ENCODE measurements at regions of chr9 and their contacts with region 1.

Region 1: DNA sequence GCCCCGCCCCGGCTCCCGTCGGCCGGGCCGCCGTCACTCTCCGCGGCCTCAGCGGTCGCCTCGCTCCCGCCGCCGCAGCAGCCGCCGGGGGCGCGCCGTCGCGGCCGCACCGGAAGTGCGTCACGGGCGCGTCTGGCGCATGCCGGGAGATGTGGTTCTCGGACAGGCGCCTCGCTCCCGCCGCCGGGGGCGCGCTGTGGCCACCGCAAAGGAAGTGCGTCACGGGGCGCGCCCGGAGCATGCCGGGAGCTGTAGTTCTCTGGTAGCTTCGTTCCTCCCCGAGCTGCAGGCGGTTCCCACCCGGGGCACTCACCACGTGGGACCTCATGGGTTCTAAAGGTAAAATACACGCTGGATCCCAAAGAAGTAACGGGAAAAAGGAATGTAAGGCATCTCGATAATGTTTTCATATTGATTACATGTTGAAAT is at the start of gene UBAC1:
- DNase-seq: peak; percentile 93
- H3K4me3 Mint-ChIP-seq: peak within 1 kb of the TSS; percentile 82
- H3K27ac Mint-ChIP-seq: peak within 1 kb of the TSS; percentile 66
- H3K4me1 Mint-ChIP-seq: peaks cover 19% of the 10 kb centered on the region
- H3K27me3 Mint-ChIP-seq: peaks cover 21% of the 10 kb centered on the region
- CTCF ChIP-seq: no peak
- total RNA-seq, gene UBAC1: 19.5 and 19.7 TPM in 2 replicates

Region 2: GRCh38 chr9:136051517-136052432 is 90.5 kb after region 1 on chr9:
- CTCF ChIA-PET with region 1: no interaction called
- intact Hi-C with region 1: loop called (anchors 10 kb)
- DNase-seq: peak; percentile 85
- H3K4me3 Mint-ChIP-seq: peak overlapping the region; percentile 68
- H3K27ac Mint-ChIP-seq: no peak overlapping the region
- H3K4me1 Mint-ChIP-seq: peaks cover 17% of the 10 kb centered on the region
- H3K27me3 Mint-ChIP-seq: no peaks in the 10 kb centered on the region
- CTCF ChIP-seq: no peak

Region 3: GRCh38 chr9:136122425-136123383 is 161.4 kb after region 1 on chr9:
- CTCF ChIA-PET with region 1: interaction called, 3 read pairs
- intact Hi-C with region 1: loop called (anchors 2 kb)
- DNase-seq: peak; percentile 74
- H3K4me3 Mint-ChIP-seq: no peak overlapping the region
- H3K27ac Mint-ChIP-seq: no peak overlapping the region
- H3K4me1 Mint-ChIP-seq: no peaks in the 10 kb centered on the region
- H3K27me3 Mint-ChIP-seq: peaks cover 34% of the 10 kb centered on the region
- CTCF ChIP-seq: peak; percentile 86